ENCODE measurements at regions of chr2 and their contacts with region 1.

Region 1: GRCh38 chr2:74529357-74530238 is at the starts of genes AUP1 and HTRA2:
- DNase-seq: peak; percentile 69 to 94 (median 80)
- ATAC-seq: peak; percentile 90
- H3K4me3 ChIP-seq: peak within 1 kb of the TSS; percentile 84
- H3K4me3 Mint-ChIP-seq: peak within 1 kb of the TSS; percentile 92
- H3K27ac ChIP-seq: peak within 1 kb of the TSS; percentile 79 to 86
- H3K27ac Mint-ChIP-seq: peak within 1 kb of the TSS; percentile 89
- H3K4me1 ChIP-seq: peaks cover 35% of the 10 kb centered on the region
- H3K4me1 Mint-ChIP-seq: peaks cover 42% of the 10 kb centered on the region
- H3K27me3 ChIP-seq: no peaks in the 10 kb centered on the region
- H3K27me3 Mint-ChIP-seq: no peaks in the 10 kb centered on the region
- CTCF ChIP-seq: no peak
- total RNA-seq, gene AUP1: 162 to 170 TPM
- total RNA-seq, gene HTRA2: 15.3 to 16.0 TPM

Region 2: DNA sequence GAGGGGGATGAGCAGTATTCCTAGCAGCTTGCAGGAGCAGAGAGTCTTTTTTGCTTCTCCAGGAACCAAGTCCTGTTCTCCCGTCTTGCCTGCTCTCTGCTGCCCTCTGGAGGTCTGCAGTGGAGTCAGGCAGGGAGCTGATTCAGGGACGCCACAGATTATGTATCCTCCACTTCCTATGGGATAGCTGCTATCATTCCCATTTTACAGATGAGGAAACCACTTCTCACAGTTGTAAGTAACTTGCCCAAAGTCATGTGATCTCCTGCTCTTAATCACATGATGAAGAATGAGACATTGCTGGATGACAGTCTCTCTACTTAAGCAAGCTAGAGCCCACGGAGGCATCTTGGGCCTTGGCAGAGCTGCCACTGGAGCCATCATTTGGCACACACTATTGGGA is 194.7 kb before region 1 on chr2:
- CTCF ChIA-PET with region 1: no interaction called
- POLR2A ChIA-PET with region 1: no interaction called
- intact Hi-C with region 1: loop called in 1 of 2 experiments (anchors 5 kb)
- DNase-seq: peak; percentile 62 to 86 (median 72)
- ATAC-seq: peak; percentile 91
- H3K4me3 ChIP-seq: no peak overlapping the region
- H3K4me3 Mint-ChIP-seq: no peak overlapping the region
- H3K27ac ChIP-seq: no peak overlapping the region
- H3K27ac Mint-ChIP-seq: no peak overlapping the region
- H3K4me1 ChIP-seq: peaks cover 9% of the 10 kb centered on the region
- H3K4me1 Mint-ChIP-seq: peaks cover 12% of the 10 kb centered on the region
- H3K27me3 ChIP-seq: no peaks in the 10 kb centered on the region
- H3K27me3 Mint-ChIP-seq: no peaks in the 10 kb centered on the region
- CTCF ChIP-seq: peak; percentile 99

Region 3: DNA sequence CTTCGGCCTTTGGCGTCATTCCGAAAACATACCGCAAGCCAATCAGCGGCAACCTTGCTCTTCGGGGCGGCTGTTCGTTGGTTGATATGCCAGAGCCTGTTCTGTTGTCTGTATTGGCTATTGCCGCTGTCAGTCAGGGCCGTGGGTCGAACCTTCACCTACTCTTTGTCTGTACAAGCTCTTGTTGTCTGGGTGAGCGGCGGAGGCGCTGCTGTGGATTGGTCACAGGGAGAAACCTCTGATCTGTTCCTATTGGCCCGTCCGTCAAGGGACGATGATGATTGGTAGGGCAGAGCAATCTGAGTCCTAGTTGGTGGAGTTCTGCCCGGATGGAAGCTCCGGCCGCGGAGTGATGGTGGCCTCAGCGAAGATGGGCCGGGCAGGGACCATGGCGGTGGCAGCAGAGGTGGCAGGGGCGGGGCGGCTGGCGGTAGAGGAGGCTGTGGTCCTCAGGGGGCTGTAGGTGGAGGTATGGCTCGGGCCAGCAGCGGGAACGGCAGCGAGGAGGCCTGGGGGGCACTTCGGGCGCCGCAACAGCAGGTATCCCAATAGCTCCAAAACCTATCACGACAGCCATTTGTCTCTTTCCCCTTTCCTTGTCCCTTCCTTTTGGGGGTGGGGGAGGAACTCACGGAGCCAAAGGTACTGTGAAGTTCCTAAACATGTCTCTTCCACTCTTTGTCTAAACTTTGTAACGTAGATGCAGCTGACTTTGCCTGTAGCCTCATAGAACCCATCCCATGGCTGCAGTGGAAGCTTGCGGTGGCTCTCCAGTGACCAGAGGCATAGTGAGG is 71.3 kb before region 1 on chr2 and contains the start of gene WBP1:
- CTCF ChIA-PET with region 1: interaction called, 10 read pairs
- POLR2A ChIA-PET with region 1: interaction called, 37 read pairs
- intact Hi-C with region 1: no loop called
- DNase-seq: peak; percentile 96 to 100 (median 98)
- ATAC-seq: peak; percentile 80
- H3K4me3 ChIP-seq: peak within 1 kb of the TSS; percentile 96
- H3K4me3 Mint-ChIP-seq: peak within 1 kb of the TSS; percentile 95
- H3K27ac ChIP-seq: peak within 1 kb of the TSS; percentile 100
- H3K27ac Mint-ChIP-seq: peak within 1 kb of the TSS; percentile 98
- H3K4me1 ChIP-seq: peaks cover 44% of the 10 kb centered on the region
- H3K4me1 Mint-ChIP-seq: peaks cover 64% of the 10 kb centered on the region
- H3K27me3 ChIP-seq: no peaks in the 10 kb centered on the region
- H3K27me3 Mint-ChIP-seq: no peaks in the 10 kb centered on the region
- CTCF ChIP-seq: no peak
- total RNA-seq, gene WBP1: 79.1 to 80.5 TPM

Region 4: DNA sequence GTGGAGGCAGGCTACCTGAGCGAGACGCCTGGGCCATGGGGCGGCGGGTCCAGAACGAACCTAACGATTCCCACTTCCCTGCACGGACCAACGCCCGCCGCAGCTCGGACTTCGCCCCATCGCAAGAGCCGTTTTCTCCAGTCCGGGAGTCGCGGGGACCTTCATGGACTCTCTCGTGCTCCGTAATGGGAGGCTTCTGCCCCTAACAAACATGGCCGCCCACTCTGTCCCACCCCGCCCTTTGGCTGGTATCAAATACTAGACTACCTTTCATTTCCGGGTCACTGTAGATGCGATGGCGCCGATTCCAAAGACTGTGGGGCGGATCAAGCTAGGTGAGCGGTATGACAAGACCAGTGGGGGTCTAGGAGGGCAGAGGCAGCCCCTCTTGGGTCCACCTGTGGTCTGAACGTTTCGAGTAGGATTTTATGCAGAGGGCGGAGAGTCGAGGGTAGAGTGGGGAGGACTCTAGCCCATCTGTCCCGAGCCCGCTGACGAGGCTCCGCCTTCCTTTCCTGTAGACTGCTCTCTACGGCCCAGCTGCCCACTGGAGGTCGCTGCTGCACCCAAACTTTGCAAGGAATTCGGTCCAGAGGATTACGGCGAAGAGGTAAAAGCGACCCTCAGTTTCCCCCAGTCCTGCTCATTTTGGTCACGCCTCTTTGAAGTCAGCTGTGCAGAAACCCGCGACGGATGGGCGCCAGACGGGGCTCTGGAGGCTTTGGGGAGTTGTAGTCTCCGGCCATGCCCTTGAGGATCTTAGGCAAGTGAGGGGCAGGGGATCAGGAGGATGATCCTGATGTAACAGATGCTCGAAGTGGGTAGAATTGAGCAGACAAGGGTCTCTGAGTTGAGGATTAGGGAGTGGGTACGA is 46.6 kb before region 1 on chr2 and contains the starts of genes CCDC142 and TTC31:
- CTCF ChIA-PET with region 1: interaction called, 34 read pairs
- POLR2A ChIA-PET with region 1: interaction called, 28 read pairs
- intact Hi-C with region 1: loop called (anchors 1 kb)
- DNase-seq: peak; percentile 87 to 96 (median 91)
- ATAC-seq: peak; percentile 94
- H3K4me3 ChIP-seq: peak within 1 kb of the TSS; percentile 77
- H3K4me3 Mint-ChIP-seq: peak within 1 kb of the TSS; percentile 99
- H3K27ac ChIP-seq: peak within 1 kb of the TSS; percentile 93 to 94
- H3K27ac Mint-ChIP-seq: peak within 1 kb of the TSS; percentile 97
- H3K4me1 ChIP-seq: peaks cover 31% of the 10 kb centered on the region
- H3K4me1 Mint-ChIP-seq: peaks cover 26% of the 10 kb centered on the region
- H3K27me3 ChIP-seq: no peaks in the 10 kb centered on the region
- H3K27me3 Mint-ChIP-seq: no peaks in the 10 kb centered on the region
- CTCF ChIP-seq: peak; percentile 85
- total RNA-seq, gene CCDC142: 10.2 to 12.4 TPM
- total RNA-seq, gene TTC31: 20.6 to 26.1 TPM

Region 5: DNA sequence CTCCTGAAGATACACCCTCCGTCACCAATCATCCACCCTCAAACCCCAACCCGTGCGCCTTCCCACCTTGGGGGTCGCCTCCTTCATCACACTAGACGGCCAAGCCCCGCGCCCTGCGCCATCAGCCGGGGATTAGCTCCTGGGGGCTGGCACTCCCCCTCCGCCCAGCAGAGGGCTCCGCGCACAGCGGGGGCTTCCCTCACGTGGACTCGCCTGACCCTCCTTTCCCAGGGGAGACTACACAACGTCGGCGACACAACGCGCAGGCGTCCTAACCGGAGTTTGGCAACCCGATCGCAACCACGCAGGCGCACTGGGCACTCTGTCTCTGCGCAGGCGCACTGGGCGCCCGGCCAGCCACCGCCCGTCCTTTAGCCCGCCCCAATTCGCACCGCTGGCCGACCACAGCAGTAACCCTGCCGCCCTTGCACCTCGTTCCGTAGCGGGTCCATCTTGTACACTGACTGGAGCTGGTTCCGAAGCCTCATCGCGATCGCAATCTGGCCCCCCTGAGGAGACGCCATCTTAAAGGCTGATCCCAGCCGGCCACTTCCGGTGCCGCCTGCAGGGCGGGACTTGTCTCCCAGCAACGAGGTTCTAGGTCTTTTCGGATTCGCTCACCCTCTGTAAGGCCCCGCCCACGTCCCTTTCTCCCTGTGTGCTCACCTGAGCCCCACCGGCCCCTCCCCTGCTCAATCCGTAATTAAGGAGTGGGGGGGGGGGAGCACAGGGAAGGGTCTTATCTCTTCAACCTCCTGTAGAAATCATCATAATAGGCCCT is 22.3 kb before region 1 on chr2 and contains the start of gene PCGF1:
- CTCF ChIA-PET with region 1: interaction called, 6 read pairs
- POLR2A ChIA-PET with region 1: interaction called, 12 read pairs
- intact Hi-C with region 1: loop called (anchors 1 kb)
- DNase-seq: peak; percentile 97 to 100 (median 98)
- ATAC-seq: peak; percentile 95
- H3K4me3 ChIP-seq: peak within 1 kb of the TSS; percentile 92
- H3K4me3 Mint-ChIP-seq: peak within 1 kb of the TSS; percentile 100
- H3K27ac ChIP-seq: peak within 1 kb of the TSS; percentile 98
- H3K27ac Mint-ChIP-seq: peak within 1 kb of the TSS; percentile 97
- H3K4me1 ChIP-seq: peaks cover 49% of the 10 kb centered on the region
- H3K4me1 Mint-ChIP-seq: peaks cover 62% of the 10 kb centered on the region
- H3K27me3 ChIP-seq: peaks cover 25 to 41% of the 10 kb centered on the region in 2 experiments
- H3K27me3 Mint-ChIP-seq: peaks cover 75% of the 10 kb centered on the region
- CTCF ChIP-seq: no peak
- total RNA-seq, gene PCGF1: 11.6 to 13.8 TPM

Region 6: DNA sequence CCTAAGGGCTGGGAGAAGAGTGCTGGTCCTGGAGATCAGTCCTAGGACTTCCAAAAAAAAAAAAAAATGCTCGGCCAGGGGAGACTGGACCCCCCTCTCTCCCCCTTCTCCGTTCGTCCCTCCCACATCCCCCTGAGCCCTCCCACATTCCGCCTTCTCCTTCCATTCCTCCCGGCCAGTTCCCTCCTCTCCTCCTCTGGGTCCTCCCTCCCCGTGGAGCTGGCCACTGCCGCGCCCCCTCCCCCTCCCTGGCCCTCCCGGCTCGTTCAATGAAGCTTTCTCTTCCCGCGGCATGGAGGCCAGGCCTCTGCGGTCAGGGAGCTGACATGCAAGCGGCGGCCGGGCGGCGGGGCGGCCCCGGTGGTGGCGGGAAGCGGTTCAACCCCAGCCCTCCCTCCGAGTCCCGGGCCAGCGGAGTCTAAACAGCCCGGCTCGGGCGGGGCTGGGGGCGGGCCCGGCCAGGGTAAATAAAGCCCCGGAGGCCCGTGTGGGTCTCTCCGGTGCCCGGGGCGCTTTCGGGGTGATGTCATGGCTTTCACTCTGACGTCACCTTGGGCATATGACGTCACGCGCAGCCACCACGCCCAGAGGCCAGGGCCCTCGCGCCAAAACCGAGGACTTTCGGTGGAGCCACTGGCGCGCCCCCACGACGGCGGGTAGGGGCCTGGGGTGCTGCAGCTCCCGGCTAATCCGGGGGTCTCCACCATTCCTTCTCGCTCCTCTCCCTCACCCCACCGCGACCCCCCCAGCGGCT is 24.5 kb after region 1 on chr2 and contains the start of gene LOXL3:
- CTCF ChIA-PET with region 1: interaction called, 4 read pairs
- POLR2A ChIA-PET with region 1: no interaction called
- intact Hi-C with region 1: loop called (anchors 1 kb)
- DNase-seq: peak in 9 of 14 experiments; percentile 47 to 88 (median 70)
- ATAC-seq: peak; percentile 54
- H3K4me3 ChIP-seq: peak within 1 kb of the TSS; percentile 80
- H3K4me3 Mint-ChIP-seq: peak within 1 kb of the TSS; percentile 94
- H3K27ac ChIP-seq: peak within 1 kb of the TSS; percentile 51 to 75
- H3K27ac Mint-ChIP-seq: peak within 1 kb of the TSS; percentile 84
- H3K4me1 ChIP-seq: peaks cover 36% of the 10 kb centered on the region
- H3K4me1 Mint-ChIP-seq: peaks cover 12% of the 10 kb centered on the region
- H3K27me3 ChIP-seq: peaks cover 9 to 14% of the 10 kb centered on the region in 2 experiments
- H3K27me3 Mint-ChIP-seq: peaks cover 27% of the 10 kb centered on the region
- CTCF ChIP-seq: no peak
- total RNA-seq, gene LOXL3: 0.25 TPM in 1 of 2 experiments, not detected in the other